ENCODE measurements at regions of chr4 and their contacts with region 1.

Region 1: DNA sequence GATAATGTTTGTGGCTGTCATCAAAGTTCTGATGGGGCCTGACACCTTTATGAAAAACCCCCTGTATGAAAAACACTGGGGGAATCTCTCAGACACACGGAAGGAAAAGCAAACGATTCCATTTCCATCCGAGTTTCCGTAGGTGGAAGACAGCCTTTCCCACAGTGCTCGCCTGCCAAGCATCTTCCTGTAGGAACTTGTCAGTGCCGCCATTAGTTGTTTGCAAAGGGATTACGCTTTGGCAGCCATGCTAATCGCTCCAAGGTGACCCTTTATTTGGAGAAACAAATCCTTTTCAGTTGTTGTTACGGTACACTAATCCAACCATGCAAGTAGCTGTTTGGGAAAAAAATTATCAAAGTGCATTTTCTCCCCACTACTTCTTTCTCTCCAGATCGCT is 44.4 kb upstream of the STOX2 start:
- DNase-seq: no peak

Region 2: GRCh38 chr4:182231080-182231479 is 1629.7 kb before region 1 on chr4:
- intact Hi-C with region 1: loop called in 1 of 2 experiments (anchors 5 kb)
- DNase-seq: no peak

Measured in posterior vena cava (tissue), 2 donors.